Natural killer cell (primary cell): ENCODE measurements at regions of chr21 and their contacts with region 1.

Region 1: DNA sequence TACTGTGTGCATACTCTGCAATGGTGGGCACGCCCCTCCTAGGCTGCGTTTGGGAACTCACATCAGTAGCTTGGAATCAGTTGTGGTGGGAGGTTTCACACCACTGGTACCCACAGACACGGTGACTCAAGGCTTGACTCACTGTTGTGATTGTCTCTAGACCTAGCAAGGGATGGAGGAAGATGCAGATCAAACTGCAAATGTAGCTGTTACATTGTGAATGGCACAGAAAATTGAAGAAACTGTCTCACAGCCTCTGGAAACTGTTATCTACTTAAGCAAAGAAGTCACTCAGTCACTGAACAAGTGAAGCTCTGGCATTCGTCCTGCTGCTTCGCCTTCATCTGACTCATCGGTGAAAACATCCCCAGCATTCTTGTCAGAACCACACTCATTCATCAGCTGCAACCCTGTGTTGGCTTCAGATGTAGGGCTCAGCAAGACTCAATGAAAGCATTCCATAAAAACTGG is 59.5 kb downstream of the POFUT2 start:
- DNase-seq: peak; percentile 72 to 89
- ATAC-seq: peak; percentile 75 to 87 (median 80)
- H3K4me3 ChIP-seq: no peak overlapping the region
- H3K4me3 Mint-ChIP-seq: peak overlapping the region; percentile 59
- H3K27ac ChIP-seq: no peak overlapping the region
- H3K27ac Mint-ChIP-seq: peak overlapping the region in 1 of 2 donors; percentile 83
- H3K4me1 ChIP-seq: peaks cover 39% of the 10 kb centered on the region
- H3K4me1 Mint-ChIP-seq: peaks cover 28 to 33% of the 10 kb centered on the region in 2 donors
- H3K27me3 ChIP-seq: peaks cover 6% of the 10 kb centered on the region
- H3K27me3 Mint-ChIP-seq: peaks cover 35 to 41% of the 10 kb centered on the region in 2 donors
- CTCF ChIP-seq: no peak

Region 2: GRCh38 chr21:44815852-44816628 is 412.2 kb before region 1 on chr21:
- intact Hi-C with region 1: no loop called
- DNase-seq: no peak
- ATAC-seq: no peak
- H3K4me3 ChIP-seq: no peak overlapping the region
- H3K4me3 Mint-ChIP-seq: peak overlapping the region; percentile 80
- H3K27ac ChIP-seq: no peak overlapping the region
- H3K27ac Mint-ChIP-seq: peak overlapping the region in 1 of 2 donors; percentile 77
- H3K4me1 ChIP-seq: peaks cover 14% of the 10 kb centered on the region
- H3K4me1 Mint-ChIP-seq: peaks cover 8% of the 10 kb centered on the region in 2 donors
- H3K27me3 ChIP-seq: no peaks in the 10 kb centered on the region
- H3K27me3 Mint-ChIP-seq: no peaks in the 10 kb centered on the region
- CTCF ChIP-seq: no peak

Region 3: GRCh38 chr21:45266518-45267389 is 38.5 kb after region 1 on chr21:
- intact Hi-C with region 1: loop called (anchors 5 kb)
- DNase-seq: peak; percentile 55 to 84
- ATAC-seq: peak; percentile 89 to 94 (median 91)
- H3K4me3 ChIP-seq: no peak overlapping the region
- H3K4me3 Mint-ChIP-seq: peak overlapping the region; percentile 73
- H3K27ac ChIP-seq: peak overlapping the region; percentile 59
- H3K27ac Mint-ChIP-seq: peak overlapping the region; percentile 86 to 87
- H3K4me1 ChIP-seq: peaks cover 33% of the 10 kb centered on the region
- H3K4me1 Mint-ChIP-seq: peaks cover 36 to 39% of the 10 kb centered on the region in 2 donors
- H3K27me3 ChIP-seq: no peaks in the 10 kb centered on the region
- H3K27me3 Mint-ChIP-seq: peaks cover 0 to 5% of the 10 kb centered on the region in 2 donors
- CTCF ChIP-seq: no peak